ENCODE measurements at regions of chr7 and their contacts with region 1.

Region 1: DNA sequence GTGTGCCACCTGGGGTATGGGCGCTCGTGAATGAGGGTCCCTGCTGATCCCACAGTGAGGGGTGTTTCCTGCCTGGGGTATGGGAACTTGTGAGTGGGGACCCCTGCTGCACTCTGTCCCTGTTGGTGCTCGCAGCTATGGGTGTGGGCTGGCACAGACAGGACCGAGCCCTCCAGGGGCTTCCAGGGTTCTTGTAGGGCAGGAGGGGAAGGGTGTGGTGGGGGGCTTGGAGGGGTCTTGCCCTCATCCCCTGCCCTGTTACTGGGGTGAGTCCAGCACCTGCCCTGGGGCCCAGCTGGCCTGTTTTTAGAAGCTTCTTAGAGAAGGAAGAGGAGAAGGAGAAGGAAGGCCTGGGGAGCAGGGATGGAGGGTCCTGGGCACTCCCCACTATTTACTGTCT is 377.0 kb upstream of the NUPR2 start:
- DNase-seq: no peak
- H3K4me3 ChIP-seq: no peak overlapping the region
- H3K27ac ChIP-seq: no peak overlapping the region
- H3K4me1 ChIP-seq: no peaks in the 10 kb centered on the region
- H3K27me3 ChIP-seq: no peaks in the 10 kb centered on the region
- CTCF ChIP-seq: no peak
- POLR2A ChIP-seq: no peak

Region 2: GRCh38 chr7:56537952-56538351 is 44.8 kb after region 1 on chr7:
- intact Hi-C with region 1: loop called in 1 of 2 experiments (anchors 5 kb)
- DNase-seq: no peak
- H3K4me3 ChIP-seq: no peak overlapping the region
- H3K27ac ChIP-seq: no peak overlapping the region
- H3K4me1 ChIP-seq: no peaks in the 10 kb centered on the region
- H3K27me3 ChIP-seq: no peaks in the 10 kb centered on the region
- CTCF ChIP-seq: no peak
- POLR2A ChIP-seq: no peak

Region 3: GRCh38 chr7:56609852-56610355 is 116.7 kb after region 1 on chr7:
- intact Hi-C with region 1: no loop called
- DNase-seq: no peak
- H3K4me3 ChIP-seq: no peak overlapping the region
- H3K27ac ChIP-seq: no peak overlapping the region
- H3K4me1 ChIP-seq: no peaks in the 10 kb centered on the region
- H3K27me3 ChIP-seq: no peaks in the 10 kb centered on the region
- CTCF ChIP-seq: no peak
- POLR2A ChIP-seq: no peak

Measured in adrenal gland (tissue), 19 donors.